ENCODE measurements at regions of chr11 and their contacts with region 1.

Region 1: GRCh38 chr11:80929031-80929805 is 1488.4 kb upstream of the TENM4 start:
- DNase-seq: no peak
- ATAC-seq: no peak
- H3K4me3 ChIP-seq: no peak overlapping the region
- H3K27ac ChIP-seq: no peak overlapping the region
- H3K4me1 ChIP-seq: no peaks in the 10 kb centered on the region
- H3K27me3 ChIP-seq: no peaks in the 10 kb centered on the region
- CTCF ChIP-seq: no peak

Region 2: GRCh38 chr11:80993536-80993935 is 64.3 kb after region 1 on chr11:
- CTCF ChIA-PET with region 1: no interaction called
- POLR2A ChIA-PET with region 1: no interaction called
- in situ Hi-C with region 1: no loop called
- intact Hi-C with region 1: no loop called
- DNase-seq: no peak
- ATAC-seq: no peak
- H3K4me3 ChIP-seq: no peak overlapping the region
- H3K27ac ChIP-seq: no peak overlapping the region
- H3K4me1 ChIP-seq: no peaks in the 10 kb centered on the region
- H3K27me3 ChIP-seq: no peaks in the 10 kb centered on the region
- CTCF ChIP-seq: no peak

Region 3: GRCh38 chr11:81112718-81113117 is 183.5 kb after region 1 on chr11:
- CTCF ChIA-PET with region 1: no interaction called
- POLR2A ChIA-PET with region 1: no interaction called
- in situ Hi-C with region 1: no loop called
- intact Hi-C with region 1: no loop called
- DNase-seq: no peak
- ATAC-seq: no peak
- H3K4me3 ChIP-seq: no peak overlapping the region
- H3K27ac ChIP-seq: no peak overlapping the region
- H3K4me1 ChIP-seq: no peaks in the 10 kb centered on the region
- H3K27me3 ChIP-seq: no peaks in the 10 kb centered on the region
- CTCF ChIP-seq: no peak

Region 4: GRCh38 chr11:82663535-82663934 is 1734.3 kb after region 1 on chr11:
- CTCF ChIA-PET with region 1: no interaction called
- POLR2A ChIA-PET with region 1: interaction called, 13 read pairs
- in situ Hi-C with region 1: no loop called
- intact Hi-C with region 1: no loop called
- DNase-seq: no peak
- ATAC-seq: no peak
- H3K4me3 ChIP-seq: no peak overlapping the region
- H3K27ac ChIP-seq: no peak overlapping the region
- H3K4me1 ChIP-seq: no peaks in the 10 kb centered on the region
- H3K27me3 ChIP-seq: no peaks in the 10 kb centered on the region
- CTCF ChIP-seq: no peak